ENCODE measurements at regions of chr11 and their contacts with region 1.

Region 1: GRCh38 chr11:57778318-57779037 is 16.9 kb downstream of the CTNND1 start:
- DNase-seq: peak; percentile 100
- H3K4me3 ChIP-seq: peak overlapping the region in 1 of 3 experiments; percentile 56
- H3K27ac ChIP-seq: peak overlapping the region; percentile 91
- H3K4me1 ChIP-seq: peaks cover 81% of the 10 kb centered on the region
- H3K27me3 ChIP-seq: no peaks in the 10 kb centered on the region
- CTCF ChIP-seq: no peak
- POLR2A ChIP-seq: peak; percentile 93

Region 2: GRCh38 chr11:57741132-57742086 is 37.1 kb before region 1 on chr11 and contains the start of gene SELENOH:
- CTCF ChIA-PET with region 1: no interaction called
- POLR2A ChIA-PET with region 1: interaction called, 4 read pairs
- dilution Hi-C with region 1: no loop called
- intact Hi-C with region 1: loop called (anchors 1 kb)
- DNase-seq: peak; percentile 98
- H3K4me3 ChIP-seq: peak within 1 kb of the TSS; percentile 55 to 94 (median 75)
- H3K27ac ChIP-seq: peak within 1 kb of the TSS; percentile 71
- H3K4me1 ChIP-seq: peaks cover 11% of the 10 kb centered on the region
- H3K27me3 ChIP-seq: no peaks in the 10 kb centered on the region
- CTCF ChIP-seq: no peak
- POLR2A ChIP-seq: peak; percentile 95
- total RNA-seq, gene SELENOH: 161 and 167 TPM in 2 replicates

Region 3: DNA sequence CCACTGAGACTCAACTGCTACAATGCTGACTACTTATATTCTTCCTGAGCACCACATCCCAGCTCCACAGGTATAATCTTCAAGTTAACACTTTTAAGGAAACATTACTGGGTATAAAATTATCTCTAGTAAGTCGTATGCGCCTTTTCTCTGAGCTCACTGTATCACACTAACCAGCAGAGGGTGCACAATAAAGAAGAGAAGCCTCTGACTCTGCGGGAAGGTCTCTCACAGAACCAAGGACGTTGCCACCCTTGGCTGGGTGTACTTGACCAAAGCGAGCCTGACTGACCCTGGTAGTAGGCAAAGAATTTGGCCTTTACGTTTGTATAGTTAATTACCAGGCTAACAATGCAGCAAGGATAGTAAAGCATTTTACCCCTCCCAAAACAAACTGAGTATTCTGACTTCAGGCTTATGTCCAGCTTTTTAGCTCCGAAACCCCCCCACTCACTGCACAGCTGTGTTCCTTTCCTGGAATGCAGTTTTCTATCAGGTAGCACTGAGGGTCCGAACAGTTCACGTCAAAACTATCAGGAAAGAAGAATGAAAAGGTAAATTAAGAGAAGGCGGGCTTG is 26.7 kb before region 1 on chr11 and contains the start of gene BTBD18:
- CTCF ChIA-PET with region 1: interaction called, 27 read pairs
- POLR2A ChIA-PET with region 1: interaction called, 4 read pairs
- dilution Hi-C with region 1: no loop called
- intact Hi-C with region 1: no loop called
- DNase-seq: peak; percentile 60
- H3K4me3 ChIP-seq: no peak within 1 kb of the TSS
- H3K27ac ChIP-seq: no peak within 1 kb of the TSS
- H3K4me1 ChIP-seq: no peaks in the 10 kb centered on the region
- H3K27me3 ChIP-seq: no peaks in the 10 kb centered on the region
- CTCF ChIP-seq: peak; percentile 46 to 49
- POLR2A ChIP-seq: no peak
- total RNA-seq, gene BTBD18: not detected in 2 replicates

Region 4: GRCh38 chr11:57761301-57762234 is 16.9 kb before region 1 on chr11 and contains the start of gene CTNND1:
- CTCF ChIA-PET with region 1: interaction called, 115 read pairs
- POLR2A ChIA-PET with region 1: interaction called, 16 read pairs
- dilution Hi-C with region 1: no loop called
- intact Hi-C with region 1: loop called (anchors 1 kb)
- DNase-seq: peak; percentile 97
- H3K4me3 ChIP-seq: peak within 1 kb of the TSS; percentile 68 to 98 (median 83)
- H3K27ac ChIP-seq: peak within 1 kb of the TSS; percentile 89
- H3K4me1 ChIP-seq: peaks cover 26% of the 10 kb centered on the region
- H3K27me3 ChIP-seq: no peaks in the 10 kb centered on the region
- CTCF ChIP-seq: no peak
- POLR2A ChIP-seq: peak; percentile 80
- total RNA-seq, gene CTNND1: 268 and 285 TPM in 2 replicates

Region 5: GRCh38 chr11:57792060-57792541 is 13.6 kb after region 1 on chr11:
- CTCF ChIA-PET with region 1: interaction called, 6 read pairs
- POLR2A ChIA-PET with region 1: interaction called, 7 read pairs
- dilution Hi-C with region 1: no loop called
- intact Hi-C with region 1: loop called (anchors 2 kb)
- DNase-seq: peak; percentile 46
- H3K4me3 ChIP-seq: no peak overlapping the region
- H3K27ac ChIP-seq: peak overlapping the region; percentile 55
- H3K4me1 ChIP-seq: peaks cover 33% of the 10 kb centered on the region
- H3K27me3 ChIP-seq: no peaks in the 10 kb centered on the region
- CTCF ChIP-seq: no peak
- POLR2A ChIP-seq: no peak

Region 6: GRCh38 chr11:59142530-59143507 is 1364.3 kb after region 1 on chr11 and contains the start of gene FAM111A:
- CTCF ChIA-PET with region 1: no interaction called
- POLR2A ChIA-PET with region 1: no interaction called
- dilution Hi-C with region 1: no loop called
- intact Hi-C with region 1: loop called (anchors 5 kb)
- DNase-seq: peak; percentile 91
- H3K4me3 ChIP-seq: peak within 1 kb of the TSS; percentile 69 to 90 (median 74)
- H3K27ac ChIP-seq: peak within 1 kb of the TSS; percentile 74
- H3K4me1 ChIP-seq: peaks cover 32% of the 10 kb centered on the region
- H3K27me3 ChIP-seq: no peaks in the 10 kb centered on the region
- CTCF ChIP-seq: peak; percentile 17 to 47
- POLR2A ChIP-seq: peak; percentile 66
- total RNA-seq, gene FAM111A: 53.0 and 57.4 TPM in 2 replicates